Activated B cell treated with CpG ODN at 0.5 μM for 24 hours (primary cell): ENCODE measurements at regions of chr10 and their contacts with region 1.

Region 1: DNA sequence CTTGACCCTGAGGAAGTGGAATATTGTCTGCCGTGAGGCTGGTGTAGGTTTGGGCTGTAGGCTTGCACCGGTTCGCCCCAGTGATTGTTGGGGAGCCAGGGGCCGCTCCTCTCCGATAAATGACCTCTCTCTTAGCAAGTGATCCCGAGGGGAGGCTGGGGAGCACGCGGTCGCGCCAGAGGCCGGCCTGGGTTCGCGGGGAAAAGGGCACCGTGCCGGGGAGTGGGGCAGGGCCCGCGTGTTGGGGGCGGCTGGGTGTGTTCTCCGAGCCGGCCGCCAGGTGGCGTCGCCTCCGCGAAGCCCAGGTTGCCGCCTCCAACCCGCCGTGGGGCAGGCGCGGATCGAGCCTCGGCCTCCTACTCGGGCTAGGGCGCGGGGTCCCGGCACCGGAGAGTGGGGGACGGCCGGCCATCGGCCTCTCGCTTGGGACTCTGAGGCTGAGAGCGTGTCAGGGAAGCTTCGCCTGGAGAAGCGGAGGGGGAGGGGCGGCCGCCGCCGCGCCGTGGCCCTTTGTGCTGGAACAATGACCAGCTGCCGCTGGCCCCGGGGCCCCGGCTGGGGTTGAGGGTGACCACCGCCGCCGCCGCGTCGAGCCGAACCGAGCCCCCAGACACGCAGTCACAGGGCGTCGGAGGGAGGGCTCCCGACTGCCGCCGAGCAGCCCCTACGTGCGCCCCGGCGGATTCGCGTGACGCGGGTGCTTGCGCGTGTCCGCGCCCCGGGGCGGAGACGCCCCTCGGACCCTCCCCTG is 442 bp upstream of the LZTS2 start:
- DNase-seq: peak; percentile 85
- ATAC-seq: peak; percentile 63
- H3K4me3 Mint-ChIP-seq: peak overlapping the region; percentile 87
- H3K27ac Mint-ChIP-seq: peak overlapping the region; percentile 88
- H3K4me1 Mint-ChIP-seq: peaks cover 30% of the 10 kb centered on the region
- H3K27me3 Mint-ChIP-seq: no peaks in the 10 kb centered on the region
- CTCF ChIP-seq: peak; percentile 80

Region 2: GRCh38 chr10:100562008-100562711 is 437.0 kb before region 1 on chr10:
- CTCF ChIA-PET with region 1: no interaction called
- POLR2A ChIA-PET with region 1: no interaction called
- intact Hi-C with region 1: loop called (anchors 5 kb)
- DNase-seq: peak; percentile 62
- ATAC-seq: peak; percentile 98
- H3K4me3 Mint-ChIP-seq: peak overlapping the region; percentile 20
- H3K27ac Mint-ChIP-seq: no peak overlapping the region
- H3K4me1 Mint-ChIP-seq: peaks cover 15% of the 10 kb centered on the region
- H3K27me3 Mint-ChIP-seq: peaks cover 46% of the 10 kb centered on the region
- CTCF ChIP-seq: no peak

Region 3: GRCh38 chr10:100969187-100970075 is 29.7 kb before region 1 on chr10 and contains the start of gene SEMA4G:
- CTCF ChIA-PET with region 1: no interaction called
- POLR2A ChIA-PET with region 1: no interaction called
- intact Hi-C with region 1: loop called (anchors 1 kb)
- DNase-seq: peak; percentile 58
- ATAC-seq: peak; percentile 88
- H3K4me3 Mint-ChIP-seq: peak within 1 kb of the TSS; percentile 64
- H3K27ac Mint-ChIP-seq: no peak within 1 kb of the TSS
- H3K4me1 Mint-ChIP-seq: peaks cover 11% of the 10 kb centered on the region
- H3K27me3 Mint-ChIP-seq: no peaks in the 10 kb centered on the region
- CTCF ChIP-seq: no peak
- total RNA-seq, gene SEMA4G: 0.60 and 0.78 TPM in 2 replicates

Region 4: GRCh38 chr10:101012525-101013364 is 13.6 kb after region 1 on chr10:
- CTCF ChIA-PET with region 1: interaction called, 13 read pairs
- POLR2A ChIA-PET with region 1: interaction called, 3 read pairs
- intact Hi-C with region 1: loop called (anchors 1 kb)
- DNase-seq: peak; percentile 46
- ATAC-seq: peak; percentile 89
- H3K4me3 Mint-ChIP-seq: no peak overlapping the region
- H3K27ac Mint-ChIP-seq: peak overlapping the region; percentile 1
- H3K4me1 Mint-ChIP-seq: peaks cover 15% of the 10 kb centered on the region
- H3K27me3 Mint-ChIP-seq: peaks cover 18% of the 10 kb centered on the region
- CTCF ChIP-seq: peak; percentile 73

Region 5: DNA sequence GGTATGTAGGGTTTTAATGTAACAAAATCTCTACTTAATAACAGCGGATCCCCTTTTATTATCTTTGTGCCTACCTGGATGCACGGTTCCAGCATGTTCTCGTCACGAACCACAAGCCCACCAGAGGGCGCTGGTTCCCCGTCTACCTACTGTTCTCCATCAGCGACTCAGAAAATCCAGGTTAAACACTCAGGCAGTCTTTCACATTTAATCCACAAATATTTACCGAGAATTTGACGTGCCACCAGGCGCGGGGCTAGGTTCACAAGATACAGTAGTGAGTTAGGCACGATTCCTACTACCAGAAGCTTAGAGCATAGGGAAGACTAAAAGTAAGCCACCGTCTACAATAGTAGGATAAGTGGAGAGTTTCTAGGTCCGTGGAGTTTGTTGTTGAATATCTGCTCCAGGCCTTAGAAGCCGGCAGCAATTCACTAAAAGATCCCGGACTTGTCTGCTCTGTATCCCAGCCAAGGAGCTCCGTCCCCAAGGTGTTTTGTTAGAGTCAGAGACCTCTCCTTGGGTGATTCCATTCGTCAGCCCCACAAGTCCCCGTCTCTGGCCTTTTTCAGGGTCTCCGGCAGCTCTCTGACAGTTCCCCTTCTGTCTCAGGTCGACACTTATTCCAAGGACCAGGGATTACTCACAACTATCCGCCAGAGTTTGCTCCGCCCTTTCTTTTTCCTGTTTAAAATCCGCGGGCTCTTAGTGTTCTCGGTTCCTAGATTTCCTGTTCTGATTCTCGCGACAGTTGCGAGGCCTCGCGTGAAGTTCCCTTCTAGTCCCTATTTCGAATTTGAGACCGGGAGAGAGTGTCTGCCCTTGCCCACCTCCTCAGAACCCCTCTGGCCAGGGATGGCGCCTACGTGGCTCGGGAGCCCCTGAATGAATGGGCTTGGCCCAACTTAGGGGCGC is 61.1 kb after region 1 on chr10:
- CTCF ChIA-PET with region 1: interaction called, 7 read pairs
- POLR2A ChIA-PET with region 1: interaction called, 9 read pairs
- intact Hi-C with region 1: loop called (anchors 2 kb)
- DNase-seq: peak; percentile 79
- ATAC-seq: peak; percentile 65
- H3K4me3 Mint-ChIP-seq: peak overlapping the region; percentile 98
- H3K27ac Mint-ChIP-seq: peak overlapping the region; percentile 95
- H3K4me1 Mint-ChIP-seq: peaks cover 34% of the 10 kb centered on the region
- H3K27me3 Mint-ChIP-seq: peaks cover 6% of the 10 kb centered on the region
- CTCF ChIP-seq: peak; percentile 62